GM23248 (cell line): ENCODE measurements at regions of chr6 and their contacts with region 1.

Region 1: DNA sequence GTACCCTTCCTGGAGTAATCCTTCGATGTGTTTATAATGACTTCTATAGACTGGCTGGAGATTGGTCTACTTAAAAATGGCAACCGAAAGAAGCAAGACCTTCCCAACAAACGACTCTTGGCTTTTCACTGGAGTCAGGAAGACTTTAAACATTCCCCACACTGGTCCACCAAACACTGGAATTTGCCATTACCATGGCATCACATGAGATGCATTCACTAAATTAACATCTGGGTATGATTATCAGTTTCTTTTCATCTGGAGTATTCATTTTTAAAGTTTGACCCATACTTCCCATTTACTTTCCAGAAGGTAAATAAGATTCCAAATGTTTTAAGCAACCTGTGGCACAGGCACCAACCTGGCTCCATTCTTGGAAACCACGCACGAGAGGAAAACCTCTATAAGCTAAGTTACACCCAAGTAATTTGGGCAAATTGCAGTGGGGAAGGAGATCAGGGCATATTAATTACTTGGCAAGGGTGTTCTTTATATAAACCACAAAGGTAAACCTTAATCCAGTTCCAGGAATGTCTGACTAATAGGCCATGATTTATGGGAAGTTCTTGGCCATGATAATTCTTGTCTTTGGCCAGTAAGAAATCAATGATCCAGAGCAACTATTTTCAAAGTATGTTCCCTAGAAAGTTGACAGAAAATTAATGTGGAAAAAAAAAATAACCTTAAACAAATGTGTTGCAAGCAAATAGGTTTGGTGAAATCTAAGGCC is 190.0 kb upstream of the COL21A1 start:
- DNase-seq: no peak
- H3K4me3 ChIP-seq: no peak overlapping the region
- H3K27ac ChIP-seq: no peak overlapping the region
- H3K4me1 ChIP-seq: no peaks in the 10 kb centered on the region
- H3K27me3 ChIP-seq: no peaks in the 10 kb centered on the region

Region 2: GRCh38 chr6:56370561-56371211 is 66.7 kb before region 1 on chr6:
- in situ Hi-C with region 1: loop called (anchors 10 kb)
- DNase-seq: peak; percentile 91
- H3K4me3 ChIP-seq: peak overlapping the region; percentile 60
- H3K27ac ChIP-seq: peak overlapping the region; percentile 80
- H3K4me1 ChIP-seq: peaks cover 36% of the 10 kb centered on the region
- H3K27me3 ChIP-seq: no peaks in the 10 kb centered on the region